ENCODE measurements at regions of chr14 and their contacts with region 1.

Region 1: DNA sequence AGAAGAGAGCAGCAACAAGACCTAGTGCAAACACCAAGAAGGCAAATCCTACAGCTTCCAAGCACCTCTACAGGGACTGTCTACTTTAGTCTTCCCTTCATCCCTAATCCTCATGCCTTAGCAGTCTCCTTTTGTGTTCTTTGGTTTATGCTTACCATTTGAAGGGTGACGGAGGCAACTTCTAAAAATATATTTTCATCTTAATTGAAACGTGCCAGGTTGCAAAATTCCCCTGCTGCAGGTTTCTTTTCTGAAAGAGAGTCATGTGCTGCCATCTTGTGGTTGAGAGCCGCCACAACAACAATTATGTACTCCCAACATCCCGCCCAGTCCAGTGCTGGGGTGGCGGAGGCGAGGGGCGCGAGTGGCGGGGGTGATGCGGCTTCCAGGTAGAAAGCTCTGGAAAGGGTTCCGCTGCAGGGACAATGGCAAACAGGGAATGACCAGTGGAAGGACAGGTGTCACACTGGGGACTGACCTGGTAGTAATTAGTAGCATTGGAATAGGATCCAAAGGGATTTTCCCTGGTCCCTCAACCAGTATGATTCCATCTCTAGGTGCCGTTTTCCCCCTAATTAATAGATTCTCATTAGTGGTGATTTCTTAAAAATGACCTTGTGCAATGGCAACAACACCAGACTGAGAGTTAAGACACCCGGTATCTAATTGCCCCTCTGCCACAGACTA is 80.3 kb upstream of the GNG2 start:
- DNase-seq: peak; percentile 81
- H3K4me3 Mint-ChIP-seq: no peak overlapping the region
- H3K27ac Mint-ChIP-seq: no peak overlapping the region
- H3K4me1 Mint-ChIP-seq: peaks cover 24% of the 10 kb centered on the region
- H3K27me3 Mint-ChIP-seq: peaks cover 18% of the 10 kb centered on the region

Region 2: GRCh38 chr14:51283402-51284085 is 496.6 kb before region 1 on chr14:
- CTCF ChIA-PET with region 1: interaction called, 39 read pairs
- POLR2A ChIA-PET with region 1: interaction called, 3 read pairs
- intact Hi-C with region 1: loop called (anchors 1 kb)
- DNase-seq: no peak
- H3K4me3 Mint-ChIP-seq: no peak overlapping the region
- H3K27ac Mint-ChIP-seq: no peak overlapping the region
- H3K4me1 Mint-ChIP-seq: no peaks in the 10 kb centered on the region
- H3K27me3 Mint-ChIP-seq: no peaks in the 10 kb centered on the region

Region 3: DNA sequence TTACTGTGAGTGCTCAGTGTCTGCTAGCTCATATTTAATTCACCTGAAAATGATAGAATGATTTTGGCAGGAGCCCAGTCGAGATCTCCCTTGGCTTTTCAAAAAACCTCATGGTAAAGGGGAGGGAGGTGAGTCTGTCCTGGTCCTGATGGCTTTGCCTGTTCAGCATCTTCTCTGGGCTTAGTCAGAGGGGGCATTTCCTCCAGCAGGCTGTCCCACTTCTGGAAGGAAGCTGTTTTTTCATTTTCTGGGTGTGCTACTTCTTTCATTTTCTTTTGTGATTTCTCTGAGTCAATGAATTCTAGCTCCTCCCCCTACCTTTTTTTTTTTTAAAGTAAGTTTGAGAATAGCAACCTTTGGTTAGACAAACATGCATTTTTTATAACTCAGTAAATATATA is 481.3 kb before region 1 on chr14:
- CTCF ChIA-PET with region 1: interaction called, 4 read pairs
- POLR2A ChIA-PET with region 1: interaction called, 3 read pairs
- intact Hi-C with region 1: loop called (anchors 5 kb)
- DNase-seq: peak; percentile 48
- H3K4me3 Mint-ChIP-seq: no peak overlapping the region
- H3K27ac Mint-ChIP-seq: peak overlapping the region; percentile 49
- H3K4me1 Mint-ChIP-seq: peaks cover 12% of the 10 kb centered on the region
- H3K27me3 Mint-ChIP-seq: peaks cover 2% of the 10 kb centered on the region

Region 4: GRCh38 chr14:51369814-51370213 is 410.3 kb before region 1 on chr14:
- CTCF ChIA-PET with region 1: interaction called, 5 read pairs
- POLR2A ChIA-PET with region 1: no interaction called
- intact Hi-C with region 1: loop called (anchors 1 kb)
- DNase-seq: peak; percentile 21
- H3K4me3 Mint-ChIP-seq: no peak overlapping the region
- H3K27ac Mint-ChIP-seq: no peak overlapping the region
- H3K4me1 Mint-ChIP-seq: no peaks in the 10 kb centered on the region
- H3K27me3 Mint-ChIP-seq: peaks cover 10% of the 10 kb centered on the region

Region 5: GRCh38 chr14:51554953-51555352 is 225.2 kb before region 1 on chr14:
- CTCF ChIA-PET with region 1: interaction called, 5 read pairs
- POLR2A ChIA-PET with region 1: no interaction called
- intact Hi-C with region 1: loop called (anchors 10 kb)
- DNase-seq: no peak
- H3K4me3 Mint-ChIP-seq: no peak overlapping the region
- H3K27ac Mint-ChIP-seq: no peak overlapping the region
- H3K4me1 Mint-ChIP-seq: no peaks in the 10 kb centered on the region
- H3K27me3 Mint-ChIP-seq: peaks cover 8% of the 10 kb centered on the region

Region 6: DNA sequence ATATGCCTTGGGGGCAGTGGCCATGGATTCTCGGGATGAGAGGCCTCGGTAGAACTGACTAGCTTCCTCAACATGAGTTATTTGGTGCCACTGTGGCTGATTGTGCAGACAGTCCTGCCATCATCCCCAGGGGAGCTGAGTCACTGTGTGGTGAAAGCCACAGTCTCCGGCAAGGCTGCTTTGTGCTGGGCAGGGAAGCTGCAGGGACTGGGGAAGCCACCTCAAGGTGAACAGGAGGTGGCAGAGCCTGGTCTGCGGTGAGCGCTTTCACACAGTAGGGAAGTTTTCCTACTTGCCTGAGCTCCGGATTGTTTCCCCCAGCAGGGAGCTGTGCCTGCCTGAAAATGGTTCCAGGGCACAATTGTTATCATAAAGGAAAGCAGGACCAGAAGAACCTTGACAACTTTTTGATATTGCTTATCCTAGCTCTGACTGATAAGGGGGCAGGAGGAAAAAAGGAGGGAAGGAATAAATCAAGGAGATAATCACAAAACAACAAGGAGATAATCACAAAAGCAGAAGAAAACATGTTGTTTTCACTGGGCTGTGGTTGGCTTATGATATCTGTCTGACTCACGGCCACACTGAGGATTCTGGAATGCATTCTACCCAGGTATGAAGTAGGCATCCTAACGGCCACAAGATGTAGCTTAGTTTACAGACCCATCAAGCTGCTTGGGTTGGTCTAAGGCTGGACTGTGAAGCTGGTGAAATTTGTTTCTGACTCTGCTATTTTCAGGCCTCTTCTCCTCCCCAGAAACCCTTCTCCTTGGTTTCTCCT is 48.1 kb after region 1 on chr14:
- CTCF ChIA-PET with region 1: interaction called, 12 read pairs
- POLR2A ChIA-PET with region 1: no interaction called
- intact Hi-C with region 1: no loop called
- DNase-seq: peak; percentile 90
- H3K4me3 Mint-ChIP-seq: no peak overlapping the region
- H3K27ac Mint-ChIP-seq: no peak overlapping the region
- H3K4me1 Mint-ChIP-seq: no peaks in the 10 kb centered on the region
- H3K27me3 Mint-ChIP-seq: no peaks in the 10 kb centered on the region

Region 7: DNA sequence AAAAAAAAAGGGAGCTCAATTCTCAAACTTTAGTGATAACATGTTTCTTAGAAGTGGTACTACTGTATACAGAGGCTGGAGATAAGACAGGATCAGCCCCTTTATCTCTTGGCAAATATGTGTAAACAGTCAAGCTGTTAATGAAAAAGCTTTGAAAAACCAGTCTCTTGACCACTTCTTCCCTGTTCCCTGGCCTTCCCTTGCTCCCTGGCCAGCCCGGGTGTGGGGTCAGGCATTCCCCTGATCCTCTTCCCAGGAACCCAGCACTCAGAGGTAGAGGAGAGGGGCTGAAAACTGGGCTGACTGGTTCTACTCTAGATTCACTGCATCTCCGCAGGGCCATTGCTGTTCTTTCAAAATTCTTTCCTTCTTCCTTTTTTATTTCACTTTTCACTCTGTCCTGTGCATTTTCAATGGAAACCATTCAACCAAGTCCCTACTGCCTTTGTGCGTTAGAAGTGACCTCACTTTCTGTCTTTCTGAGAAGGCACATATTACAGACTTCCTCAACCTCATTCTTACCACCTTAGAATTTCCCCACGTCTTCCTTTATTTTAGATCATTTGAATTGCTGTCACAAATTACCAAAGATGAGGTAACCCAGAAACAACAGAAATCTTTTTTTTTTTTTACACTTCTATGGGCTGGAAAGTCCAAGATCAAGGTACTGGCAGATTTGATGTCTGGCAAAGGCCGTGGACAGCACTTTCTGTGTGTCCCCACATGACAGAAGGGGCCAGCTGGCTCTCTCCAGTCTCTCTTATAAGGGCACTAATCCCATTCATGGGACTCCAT is 86.0 kb after region 1 on chr14:
- CTCF ChIA-PET with region 1: no interaction called
- POLR2A ChIA-PET with region 1: no interaction called
- intact Hi-C with region 1: loop called (anchors 5 kb)
- DNase-seq: peak; percentile 46
- H3K4me3 Mint-ChIP-seq: no peak overlapping the region
- H3K27ac Mint-ChIP-seq: no peak overlapping the region
- H3K4me1 Mint-ChIP-seq: peaks cover 19% of the 10 kb centered on the region
- H3K27me3 Mint-ChIP-seq: no peaks in the 10 kb centered on the region